AG04449 (cell line): ENCODE measurements at regions of chr3 and their contacts with region 1.

Region 1: DNA sequence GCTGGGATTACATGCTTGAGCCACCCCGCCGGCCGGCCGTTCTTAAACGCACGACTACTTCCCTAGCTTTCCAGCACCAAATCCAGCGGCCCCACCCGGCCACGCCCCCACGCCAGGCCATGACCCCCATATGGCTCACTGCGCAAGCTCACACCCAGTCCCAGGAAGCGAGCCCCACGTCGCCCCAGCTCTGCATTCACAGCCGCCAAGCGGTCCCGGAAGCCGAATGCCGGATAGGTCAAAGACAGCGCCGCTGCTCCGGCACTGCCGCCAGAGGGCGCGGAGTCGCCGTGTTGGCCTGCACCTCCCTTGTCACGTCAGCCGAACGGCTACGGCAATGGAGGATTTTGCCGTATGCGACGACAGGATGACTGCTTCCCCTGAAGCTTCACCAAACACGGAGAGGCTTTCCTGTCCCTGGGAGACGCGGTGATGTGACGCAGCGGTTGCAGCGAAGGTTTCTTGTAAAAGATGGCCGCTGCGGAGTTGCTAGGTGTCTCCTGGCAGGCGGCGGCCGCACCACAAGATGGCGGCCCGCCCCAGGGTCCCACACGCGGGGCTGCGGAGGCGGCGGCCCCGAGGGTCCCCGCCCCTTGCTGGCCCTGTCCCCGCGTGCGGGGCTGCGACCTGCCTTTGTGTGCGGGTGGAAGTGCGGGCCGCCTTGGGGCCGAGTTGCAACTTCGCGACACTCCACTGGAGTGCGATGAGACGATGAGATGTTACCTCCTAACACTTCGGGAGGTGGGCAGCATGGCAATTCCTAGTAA is 30.2 kb upstream of the RPN1 start:
- DNase-seq: peak; percentile 73
- H3K4me3 ChIP-seq: peak overlapping the region; percentile 80
- CTCF ChIP-seq: peak; percentile 100

Region 2: DNA sequence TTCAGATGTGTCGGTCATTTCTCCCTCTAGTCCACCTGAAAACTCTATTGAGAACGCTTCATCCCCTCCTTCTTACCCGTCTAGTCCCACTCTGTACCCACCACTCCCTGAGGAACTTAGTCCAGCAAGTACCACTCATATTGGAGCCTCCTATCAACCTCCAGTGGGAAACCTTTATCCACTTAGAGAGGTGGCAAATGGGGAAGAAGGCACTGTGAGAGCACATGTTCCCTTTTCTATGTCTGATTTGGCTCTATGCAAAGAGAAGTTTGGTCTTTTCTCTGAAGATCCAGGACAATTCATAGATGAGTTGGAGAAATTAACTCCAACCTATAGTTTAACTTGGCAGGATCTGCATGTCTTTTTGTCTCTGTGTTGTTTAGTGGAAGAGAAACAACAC is 13.1 kb before region 1 on chr3:
- CTCF ChIA-PET with region 1: interaction called, 11 read pairs
- POLR2A ChIA-PET with region 1: no interaction called
- DNase-seq: no peak
- H3K4me3 ChIP-seq: no peak overlapping the region
- CTCF ChIP-seq: no peak

Region 3: DNA sequence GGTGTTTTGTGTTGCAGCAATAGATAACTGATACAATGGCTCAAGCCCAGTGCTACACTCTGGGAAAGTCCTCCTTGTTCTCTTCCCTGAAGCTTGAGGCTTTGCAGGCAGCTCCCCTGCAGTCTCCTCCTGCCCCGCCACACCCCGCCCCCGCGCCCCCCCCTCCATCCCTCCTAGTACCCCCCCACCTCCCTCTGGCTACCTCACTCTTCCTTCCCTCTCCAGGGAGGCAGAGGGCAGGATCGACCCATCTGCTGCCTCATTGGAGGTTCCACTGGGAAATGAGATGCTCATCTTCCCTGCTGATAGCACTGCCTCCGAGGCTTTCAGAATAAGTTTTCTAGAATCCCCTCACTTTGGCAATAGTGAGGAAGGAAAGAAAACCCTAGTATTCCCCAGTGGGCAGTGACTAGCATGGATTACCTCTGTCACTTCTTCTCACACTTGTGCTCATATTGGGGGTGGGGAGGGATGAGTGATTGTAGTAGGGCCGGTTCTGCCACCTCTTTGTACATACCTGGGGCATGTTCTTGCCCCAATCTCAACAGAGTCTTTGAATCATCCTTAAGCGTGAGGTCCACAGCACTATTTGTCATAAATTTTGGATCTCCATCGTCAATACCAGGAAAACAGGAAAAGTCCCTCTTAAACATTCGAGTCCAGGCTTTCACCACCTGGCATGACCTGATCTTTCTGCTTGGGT is 28.9 kb after region 1 on chr3:
- CTCF ChIA-PET with region 1: interaction called, 11 read pairs
- POLR2A ChIA-PET with region 1: no interaction called
- DNase-seq: no peak
- H3K4me3 ChIP-seq: no peak overlapping the region
- CTCF ChIP-seq: no peak

Region 4: DNA sequence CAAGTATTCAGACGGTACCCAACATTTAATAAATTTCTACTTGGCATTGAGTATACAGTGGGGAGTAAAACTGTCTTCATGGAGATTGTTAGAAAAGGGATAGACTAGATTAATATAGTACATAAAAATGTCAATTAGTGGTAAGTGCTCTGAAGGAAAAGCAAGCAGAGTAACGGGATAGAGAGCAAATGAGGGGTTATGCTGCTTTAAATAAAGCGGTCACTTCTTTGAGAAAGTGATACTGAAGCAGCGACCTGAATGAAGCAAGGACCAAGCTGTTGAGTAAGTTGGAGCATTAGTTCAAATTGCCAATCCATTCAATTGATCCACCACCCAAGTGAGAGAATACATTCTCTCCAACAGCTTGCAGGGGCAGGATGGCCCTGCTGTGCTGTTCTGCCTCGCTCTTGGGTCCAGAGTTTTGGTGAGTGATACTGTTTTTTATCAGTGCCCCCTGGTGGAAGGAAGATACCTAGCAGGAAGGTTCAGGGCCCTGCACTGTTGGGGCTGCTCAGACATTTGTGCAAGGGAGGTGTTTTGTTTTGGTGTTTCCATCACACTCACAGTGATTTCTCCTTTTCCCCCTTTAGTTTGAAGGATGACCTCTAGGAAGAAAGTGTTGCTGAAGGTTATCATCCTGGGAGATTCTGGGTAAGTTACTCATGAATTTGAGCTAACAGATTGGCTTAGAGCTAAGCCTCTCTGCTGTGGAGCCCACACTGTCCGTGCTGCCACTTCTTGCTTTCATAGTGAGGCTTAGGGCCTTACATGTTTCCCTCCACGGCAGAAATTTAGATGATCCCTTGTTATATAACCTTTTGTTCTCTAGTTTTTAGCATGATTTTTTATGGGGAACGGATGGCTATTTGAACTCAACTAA is 114.2 kb after region 1 on chr3:
- CTCF ChIA-PET with region 1: interaction called, 134 read pairs
- POLR2A ChIA-PET with region 1: no interaction called
- DNase-seq: no peak
- H3K4me3 ChIP-seq: no peak overlapping the region; the same call in 1 of the 2 replicates
- CTCF ChIP-seq: peak; percentile 69

Region 5: GRCh38 chr3:128814519-128815317 is 133.9 kb after region 1 on chr3:
- CTCF ChIA-PET with region 1: interaction called, 13 read pairs
- POLR2A ChIA-PET with region 1: no interaction called
- DNase-seq: no peak
- H3K4me3 ChIP-seq: no peak overlapping the region
- CTCF ChIP-seq: no peak

Region 6: GRCh38 chr3:128845778-128846485 is 165.1 kb after region 1 on chr3:
- CTCF ChIA-PET with region 1: interaction called, 66 read pairs
- POLR2A ChIA-PET with region 1: interaction called, 6 read pairs
- DNase-seq: no peak
- H3K4me3 ChIP-seq: peak overlapping the region; percentile 48
- CTCF ChIP-seq: peak; percentile 66